ENCODE measurements at regions of chr1 and their contacts with region 1.

Region 1: GRCh38 chr1:37449936-37450335 is 24.4 kb upstream of the ZC3H12A start:
- DNase-seq: no peak
- ATAC-seq: no peak
- H3K4me3 Mint-ChIP-seq: no peak overlapping the region
- H3K27ac Mint-ChIP-seq: no peak overlapping the region
- H3K4me1 Mint-ChIP-seq: peaks cover 61% of the 10 kb centered on the region
- H3K27me3 Mint-ChIP-seq: peaks cover 5% of the 10 kb centered on the region
- CTCF ChIP-seq: no peak

Region 2: GRCh38 chr1:37474046-37474759 is 24.3 kb after region 1 on chr1 and contains the start of gene ZC3H12A:
- CTCF ChIA-PET with region 1: interaction called, 16 read pairs
- POLR2A ChIA-PET with region 1: no interaction called
- DNase-seq: peak; percentile 83
- ATAC-seq: peak; percentile 67
- H3K4me3 Mint-ChIP-seq: peak within 1 kb of the TSS; percentile 73
- H3K27ac Mint-ChIP-seq: peak within 1 kb of the TSS; percentile 27; the same call in 1 of the 2 replicates
- H3K4me1 Mint-ChIP-seq: peaks cover 57% of the 10 kb centered on the region
- H3K27me3 Mint-ChIP-seq: peaks cover 23% of the 10 kb centered on the region
- CTCF ChIP-seq: no peak
- total RNA-seq, gene ZC3H12A: 8.4 to 10.9 TPM (median 9.6 TPM) in 3 replicates

Measured in WTC11 (cell line).